MCF 10A (cell line): ENCODE measurements at regions of chr6 and their contacts with region 1.

Region 1: DNA sequence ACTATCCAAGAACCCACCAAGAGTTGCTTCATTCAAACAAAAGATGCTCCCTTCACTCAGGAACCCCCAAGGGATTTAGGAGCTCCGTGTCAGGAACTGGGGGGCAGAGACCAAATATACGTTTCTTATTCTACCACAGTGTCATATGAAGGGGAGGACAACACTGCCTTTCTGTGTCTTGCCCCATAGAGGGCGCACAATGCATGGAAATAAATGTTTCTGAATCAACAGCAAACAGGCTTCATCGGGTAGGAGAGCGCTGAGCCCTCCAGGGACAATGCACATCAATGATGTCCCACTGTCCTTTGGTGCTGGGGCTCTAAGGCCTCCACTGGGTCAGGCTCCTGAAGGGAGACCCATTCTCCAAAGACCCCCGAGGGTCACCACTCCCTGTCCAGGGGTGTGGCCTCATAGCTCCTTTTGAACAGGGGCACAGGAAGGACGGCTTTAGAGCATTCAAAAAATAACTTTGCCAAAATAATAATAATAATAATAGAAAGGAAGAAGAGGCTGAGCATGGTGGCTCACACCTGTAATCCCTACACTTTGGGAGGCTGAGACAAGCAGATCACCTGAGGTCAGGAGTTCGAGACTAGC is 31.1 kb downstream of the PLG start:
- DNase-seq: peak; percentile 60
- H3K4me3 Mint-ChIP-seq: no peak overlapping the region
- H3K27ac Mint-ChIP-seq: no peak overlapping the region
- H3K4me1 Mint-ChIP-seq: peaks cover 6% of the 10 kb centered on the region
- H3K27me3 Mint-ChIP-seq: no peaks in the 10 kb centered on the region
- CTCF ChIP-seq: peak; percentile 85

Region 2: DNA sequence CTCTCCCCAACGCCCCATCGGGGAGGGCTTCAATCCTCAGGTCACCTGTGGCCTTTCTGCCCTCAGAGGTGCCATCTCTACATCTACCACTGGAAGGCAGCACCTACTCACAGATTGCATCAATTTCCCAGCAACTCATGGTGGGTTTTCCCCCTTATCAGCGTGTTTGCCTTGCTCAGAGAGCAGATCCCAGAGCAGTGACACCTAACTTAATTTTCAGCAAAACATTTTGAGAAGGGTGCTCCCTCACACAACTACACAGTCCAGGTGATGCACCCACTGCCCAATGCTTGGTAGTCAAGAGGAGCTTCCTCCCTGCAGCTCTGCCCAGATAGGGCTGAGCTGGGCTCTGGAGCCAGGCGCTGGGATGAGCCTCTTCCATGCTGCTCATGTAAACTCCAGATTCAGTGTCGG is 17.1 kb after region 1 on chr6:
- CTCF ChIA-PET with region 1: interaction called, 13 read pairs
- POLR2A ChIA-PET with region 1: interaction called, 4 read pairs
- intact Hi-C with region 1: no loop called
- DNase-seq: peak; percentile 45
- H3K4me3 Mint-ChIP-seq: no peak overlapping the region
- H3K27ac Mint-ChIP-seq: no peak overlapping the region
- H3K4me1 Mint-ChIP-seq: no peaks in the 10 kb centered on the region
- H3K27me3 Mint-ChIP-seq: no peaks in the 10 kb centered on the region
- CTCF ChIP-seq: peak; percentile 70

Region 3: GRCh38 chr6:160766989-160767660 is 34.0 kb after region 1 on chr6:
- CTCF ChIA-PET with region 1: interaction called, 16 read pairs
- POLR2A ChIA-PET with region 1: no interaction called
- intact Hi-C with region 1: loop called (anchors 2 kb)
- DNase-seq: peak; percentile 28
- H3K4me3 Mint-ChIP-seq: peak overlapping the region; percentile 70
- H3K27ac Mint-ChIP-seq: no peak overlapping the region
- H3K4me1 Mint-ChIP-seq: no peaks in the 10 kb centered on the region
- H3K27me3 Mint-ChIP-seq: no peaks in the 10 kb centered on the region
- CTCF ChIP-seq: peak; percentile 48

Region 4: GRCh38 chr6:160919723-160920440 is 186.7 kb after region 1 on chr6:
- CTCF ChIA-PET with region 1: interaction called, 11 read pairs
- POLR2A ChIA-PET with region 1: no interaction called
- intact Hi-C with region 1: no loop called
- DNase-seq: peak; percentile 97
- H3K4me3 Mint-ChIP-seq: no peak overlapping the region
- H3K27ac Mint-ChIP-seq: peak overlapping the region; percentile 59
- H3K4me1 Mint-ChIP-seq: peaks cover 23% of the 10 kb centered on the region
- H3K27me3 Mint-ChIP-seq: no peaks in the 10 kb centered on the region
- CTCF ChIP-seq: no peak